CD4-positive, alpha-beta memory T cell (primary cell): ENCODE measurements at regions of chr6 and their contacts with region 1.

Region 1: GRCh38 chr6:158660333-158660754 is 10.5 kb downstream of the SYTL3 start:
- DNase-seq: peak; percentile 61 to 70 (median 67)
- H3K4me3 ChIP-seq: no peak overlapping the region
- H3K4me3 Mint-ChIP-seq: peak overlapping the region in 6 of 8 donors; percentile 35 to 62 (median 48)
- H3K27ac ChIP-seq: no peak overlapping the region
- H3K27ac Mint-ChIP-seq: peak overlapping the region; percentile 35 to 93 (median 88)
- H3K4me1 ChIP-seq: peaks cover 28% of the 10 kb centered on the region
- H3K4me1 Mint-ChIP-seq: peaks cover 20 to 44% (median 30%) of the 10 kb centered on the region in 4 donors
- H3K27me3 ChIP-seq: no peaks in the 10 kb centered on the region
- H3K27me3 Mint-ChIP-seq: no peaks in the 10 kb centered on the region

Region 2: DNA sequence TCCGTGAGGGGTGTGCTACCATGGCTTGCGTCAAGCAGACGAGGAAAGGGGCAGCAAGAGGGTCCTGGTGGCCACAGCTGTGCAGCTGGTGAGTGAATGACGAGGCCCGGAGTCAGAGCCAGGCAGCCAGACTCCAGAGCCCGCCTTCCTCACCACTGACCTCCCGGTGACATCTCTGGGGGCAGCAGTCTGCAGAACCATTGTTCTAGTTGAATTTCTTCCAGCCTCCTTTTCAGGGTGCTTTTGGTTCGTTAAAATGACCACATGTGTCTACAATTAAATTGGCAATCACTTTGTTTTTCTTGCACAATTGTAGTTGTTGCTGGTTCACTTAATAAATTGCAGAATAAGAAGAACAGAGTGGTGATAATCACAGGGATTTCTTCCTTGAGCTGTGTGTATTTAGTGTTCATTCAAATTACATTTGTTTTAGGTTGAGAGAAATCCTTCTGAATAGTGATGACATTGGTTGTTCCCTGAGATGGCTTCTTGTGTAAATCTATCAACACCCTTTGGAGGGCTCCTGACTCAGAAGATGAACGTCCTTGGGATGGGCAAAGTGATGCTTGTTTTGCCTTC is 251.7 kb before region 1 on chr6:
- CTCF ChIA-PET with region 1: no interaction called
- POLR2A ChIA-PET with region 1: no interaction called
- intact Hi-C with region 1: no loop called
- DNase-seq: no peak
- H3K4me3 ChIP-seq: no peak overlapping the region
- H3K4me3 Mint-ChIP-seq: no peak overlapping the region
- H3K27ac ChIP-seq: no peak overlapping the region
- H3K27ac Mint-ChIP-seq: peak overlapping the region in 1 of 7 donors; percentile 54
- H3K4me1 ChIP-seq: peaks cover 7% of the 10 kb centered on the region
- H3K4me1 Mint-ChIP-seq: peaks cover 0 to 8% (median 2%) of the 10 kb centered on the region in 4 donors
- H3K27me3 ChIP-seq: no peaks in the 10 kb centered on the region
- H3K27me3 Mint-ChIP-seq: no peaks in the 10 kb centered on the region

Region 3: GRCh38 chr6:158644231-158645063 is 15.9 kb before region 1 on chr6 and contains the start of gene DYNLT1:
- CTCF ChIA-PET with region 1: interaction called, 110 read pairs
- POLR2A ChIA-PET with region 1: interaction called, 130 read pairs
- intact Hi-C with region 1: no loop called
- DNase-seq: peak; percentile 78 to 95 (median 88)
- H3K4me3 ChIP-seq: peak within 1 kb of the TSS; percentile 84 to 85
- H3K4me3 Mint-ChIP-seq: peak within 1 kb of the TSS; percentile 99 to 100 (median 99)
- H3K27ac ChIP-seq: peak within 1 kb of the TSS; percentile 96
- H3K27ac Mint-ChIP-seq: peak within 1 kb of the TSS; percentile 92 to 100 (median 99)
- H3K4me1 ChIP-seq: peaks cover 58% of the 10 kb centered on the region
- H3K4me1 Mint-ChIP-seq: peaks cover 46 to 82% (median 55%) of the 10 kb centered on the region in 4 donors
- H3K27me3 ChIP-seq: no peaks in the 10 kb centered on the region
- H3K27me3 Mint-ChIP-seq: no peaks in the 10 kb centered on the region
- total RNA-seq, gene DYNLT1: 78.8 to 90.4 TPM

Region 4: GRCh38 chr6:158649289-158650143 is 10.8 kb before region 1 on chr6 and contains the start of gene SYTL3:
- CTCF ChIA-PET with region 1: interaction called, 110 read pairs
- POLR2A ChIA-PET with region 1: interaction called, 130 read pairs
- intact Hi-C with region 1: no loop called
- DNase-seq: peak; percentile 92 to 94 (median 92)
- H3K4me3 ChIP-seq: peak within 1 kb of the TSS in 1 of 2 donors; percentile 26
- H3K4me3 Mint-ChIP-seq: peak within 1 kb of the TSS; percentile 69 to 89 (median 84)
- H3K27ac ChIP-seq: peak within 1 kb of the TSS; percentile 66
- H3K27ac Mint-ChIP-seq: peak within 1 kb of the TSS; percentile 82 to 98 (median 94)
- H3K4me1 ChIP-seq: peaks cover 57% of the 10 kb centered on the region
- H3K4me1 Mint-ChIP-seq: peaks cover 49 to 77% (median 58%) of the 10 kb centered on the region in 4 donors
- H3K27me3 ChIP-seq: no peaks in the 10 kb centered on the region
- H3K27me3 Mint-ChIP-seq: no peaks in the 10 kb centered on the region
- total RNA-seq, gene SYTL3: 22.2 to 24.3 TPM

Region 5: GRCh38 chr6:158674342-158675131 is 14.2 kb after region 1 on chr6:
- CTCF ChIA-PET with region 1: interaction called, 10 read pairs
- POLR2A ChIA-PET with region 1: no interaction called
- intact Hi-C with region 1: no loop called
- DNase-seq: no peak
- H3K4me3 ChIP-seq: no peak overlapping the region
- H3K4me3 Mint-ChIP-seq: peak overlapping the region in 1 of 8 donors; percentile 46
- H3K27ac ChIP-seq: no peak overlapping the region
- H3K27ac Mint-ChIP-seq: peak overlapping the region in 5 of 7 donors; percentile 13 to 55 (median 36)
- H3K4me1 ChIP-seq: no peaks in the 10 kb centered on the region
- H3K4me1 Mint-ChIP-seq: peaks cover 0 to 8% (median 4%) of the 10 kb centered on the region in 4 donors
- H3K27me3 ChIP-seq: no peaks in the 10 kb centered on the region
- H3K27me3 Mint-ChIP-seq: no peaks in the 10 kb centered on the region

Region 6: DNA sequence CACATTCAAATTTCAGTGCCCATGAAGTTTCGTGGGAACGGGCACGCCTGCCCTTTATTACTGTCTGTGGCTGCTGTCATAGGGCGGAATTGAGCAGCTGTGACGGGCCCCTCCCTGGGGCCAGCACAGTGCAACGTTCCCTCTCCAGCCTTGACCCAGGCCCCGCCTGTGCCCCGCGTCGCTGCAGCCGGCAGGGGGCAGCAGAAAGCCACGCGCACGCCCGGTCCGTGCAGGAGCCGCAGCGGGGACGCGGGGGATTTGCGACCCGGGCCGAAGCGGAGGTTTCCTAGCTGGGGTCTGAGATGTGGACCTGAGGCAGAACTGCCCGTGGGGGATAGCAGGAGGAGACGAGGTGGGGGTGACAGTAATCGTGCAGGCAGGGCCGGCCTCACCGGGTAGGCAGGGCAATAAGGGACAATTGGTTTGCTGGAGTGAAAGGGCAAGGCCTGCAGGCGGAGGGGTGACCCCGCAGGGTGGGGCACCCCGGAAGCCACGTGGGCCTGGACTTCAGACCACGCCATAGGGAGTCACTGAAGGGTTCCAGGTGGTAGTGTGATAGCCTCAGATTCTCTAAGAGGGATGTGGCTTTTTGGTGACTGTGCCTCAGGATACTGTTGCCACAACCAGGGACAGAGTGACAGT is 44.0 kb after region 1 on chr6:
- CTCF ChIA-PET with region 1: interaction called, 23 read pairs
- POLR2A ChIA-PET with region 1: no interaction called
- intact Hi-C with region 1: no loop called
- DNase-seq: peak; percentile 67 to 82 (median 72)
- H3K4me3 ChIP-seq: peak overlapping the region; percentile 39 to 57
- H3K4me3 Mint-ChIP-seq: peak overlapping the region; percentile 82 to 89 (median 83)
- H3K27ac ChIP-seq: no peak overlapping the region
- H3K27ac Mint-ChIP-seq: peak overlapping the region; percentile 41 to 90 (median 79)
- H3K4me1 ChIP-seq: peaks cover 10% of the 10 kb centered on the region
- H3K4me1 Mint-ChIP-seq: peaks cover 9 to 21% (median 15%) of the 10 kb centered on the region in 4 donors
- H3K27me3 ChIP-seq: no peaks in the 10 kb centered on the region
- H3K27me3 Mint-ChIP-seq: no peaks in the 10 kb centered on the region

Region 7: GRCh38 chr6:158972241-158973233 is 312.2 kb after region 1 on chr6:
- CTCF ChIA-PET with region 1: interaction called, 7 read pairs
- POLR2A ChIA-PET with region 1: no interaction called
- intact Hi-C with region 1: loop called (anchors 1 kb)
- DNase-seq: peak in 4 of 5 donors; percentile 57 to 66 (median 60)
- H3K4me3 ChIP-seq: no peak overlapping the region
- H3K4me3 Mint-ChIP-seq: no peak overlapping the region
- H3K27ac ChIP-seq: no peak overlapping the region
- H3K27ac Mint-ChIP-seq: peak overlapping the region in 2 of 7 donors; percentile 31 to 47
- H3K4me1 ChIP-seq: no peaks in the 10 kb centered on the region
- H3K4me1 Mint-ChIP-seq: peaks cover 0 to 3% (median 0%) of the 10 kb centered on the region in 4 donors
- H3K27me3 ChIP-seq: no peaks in the 10 kb centered on the region
- H3K27me3 Mint-ChIP-seq: no peaks in the 10 kb centered on the region